ENCODE measurements at regions of chr2 and their contacts with region 1.

Region 1: DNA sequence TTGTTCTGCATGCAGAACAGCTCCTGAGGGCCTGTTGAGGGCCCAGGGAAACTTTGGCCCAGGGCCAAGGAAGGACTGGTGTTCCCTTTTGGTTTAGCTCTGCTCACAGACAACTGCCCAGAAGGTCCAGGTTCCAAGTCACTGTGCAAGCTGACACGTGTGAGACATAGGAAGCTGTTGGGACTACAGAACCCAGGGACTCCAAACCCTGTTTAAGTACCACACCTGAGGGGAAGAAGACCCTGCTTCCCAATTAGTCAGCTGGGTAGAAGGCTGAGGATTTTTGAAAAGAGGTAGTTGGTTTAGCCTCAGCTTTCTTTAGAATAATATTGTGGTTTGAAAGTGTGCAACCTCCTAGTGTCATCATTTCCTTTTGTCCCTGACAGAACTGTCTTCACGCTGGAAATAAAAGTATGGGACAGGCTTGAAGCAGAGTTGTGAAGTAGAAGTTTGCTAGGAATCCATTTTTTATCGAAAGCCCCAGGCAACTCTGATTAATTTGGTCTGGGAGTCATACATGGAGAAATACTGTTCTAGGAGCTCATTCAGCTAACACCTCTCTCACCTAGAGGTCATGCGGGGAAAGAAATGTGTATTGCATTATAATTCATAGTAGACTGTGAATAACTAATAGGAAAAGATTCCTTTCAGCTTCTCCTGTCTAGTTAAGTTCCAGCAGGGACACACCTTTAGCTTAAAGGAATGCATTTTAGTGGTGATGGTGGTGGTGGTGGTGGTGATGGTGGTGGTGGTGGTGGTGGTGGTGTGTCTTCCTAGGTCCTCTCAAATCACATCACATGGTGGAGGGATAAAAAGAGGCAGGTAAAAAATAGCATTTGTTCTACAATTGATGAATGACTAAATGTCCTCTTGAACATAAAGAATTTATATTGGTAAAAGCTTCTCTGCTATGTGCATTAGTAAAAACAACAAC is 19.8 kb upstream of the IL1RL1 start:
- DNase-seq: no peak
- H3K4me3 Mint-ChIP-seq: no peak overlapping the region
- H3K27ac Mint-ChIP-seq: no peak overlapping the region
- H3K4me1 Mint-ChIP-seq: peaks cover 49% of the 10 kb centered on the region
- H3K27me3 Mint-ChIP-seq: peaks cover 8% of the 10 kb centered on the region

Region 2: DNA sequence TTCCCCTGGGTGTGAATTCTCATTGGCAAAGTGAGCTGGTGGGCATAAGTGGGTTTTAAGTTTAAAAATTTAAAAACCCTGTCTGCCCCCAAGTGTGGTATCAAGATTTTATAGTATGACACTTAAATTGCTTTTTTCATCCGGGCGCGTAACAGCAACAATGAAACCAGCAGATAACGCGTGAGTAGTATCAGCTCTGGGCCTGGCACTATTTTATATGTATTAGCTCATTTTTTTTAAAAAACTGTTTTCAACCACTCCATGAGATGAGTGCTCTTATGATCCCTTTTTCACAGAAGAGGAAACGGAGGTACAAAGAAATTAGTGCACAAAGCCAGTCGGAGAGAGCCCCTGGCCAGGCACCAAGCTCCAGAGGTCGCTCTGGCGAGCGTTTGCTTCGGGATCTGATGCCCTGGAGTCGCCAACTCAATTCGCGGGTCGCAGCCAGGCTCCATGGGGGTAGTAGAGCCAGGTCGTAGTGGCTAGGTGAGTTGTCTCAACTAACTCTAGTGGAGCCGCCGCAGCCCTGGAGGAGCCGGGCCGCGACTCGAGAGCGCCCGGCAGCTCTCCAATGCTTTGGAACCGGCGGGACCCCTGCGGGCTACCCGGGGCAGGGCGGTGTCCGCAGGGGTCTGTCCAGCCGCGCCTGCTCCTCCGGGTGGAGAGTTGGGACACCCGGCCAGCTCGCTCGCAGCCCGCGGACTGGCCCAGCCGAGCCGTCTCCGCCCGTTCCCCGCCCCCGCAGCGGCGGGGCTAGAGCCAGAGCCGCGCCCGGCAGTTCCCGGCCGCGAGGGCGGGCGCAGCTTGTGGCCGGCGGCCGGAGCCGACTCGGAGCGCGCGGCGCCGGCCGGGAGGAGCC is 149.4 kb before region 1 on chr2 and contains the start of gene IL1R1:
- CTCF ChIA-PET with region 1: no interaction called
- DNase-seq: peak; percentile 27
- H3K4me3 Mint-ChIP-seq: peak within 1 kb of the TSS; percentile 55
- H3K27ac Mint-ChIP-seq: no peak within 1 kb of the TSS
- H3K4me1 Mint-ChIP-seq: peaks cover 21% of the 10 kb centered on the region
- H3K27me3 Mint-ChIP-seq: peaks cover 33% of the 10 kb centered on the region

Region 3: GRCh38 chr2:102301867-102302362 is 10.3 kb after region 1 on chr2:
- CTCF ChIA-PET with region 1: interaction called, 16 read pairs
- DNase-seq: peak; percentile 63
- H3K4me3 Mint-ChIP-seq: no peak overlapping the region
- H3K27ac Mint-ChIP-seq: peak overlapping the region; percentile 39
- H3K4me1 Mint-ChIP-seq: peaks cover 38% of the 10 kb centered on the region
- H3K27me3 Mint-ChIP-seq: no peaks in the 10 kb centered on the region